Panc1 (cell line): ENCODE measurements at regions of chr6 and their contacts with region 1.

Region 1: GRCh38 chr6:116969211-116969863 is 92.3 kb downstream of the RFX6 start:
- DNase-seq: peak; percentile 45
- ATAC-seq: peak; percentile 91
- H3K4me3 ChIP-seq: no peak overlapping the region
- H3K27ac ChIP-seq: no peak overlapping the region
- H3K4me1 ChIP-seq: no peaks in the 10 kb centered on the region
- H3K27me3 ChIP-seq: peaks cover 8% of the 10 kb centered on the region
- CTCF ChIP-seq: peak; percentile 84; the same call in 1 of the 2 replicates

Region 2: GRCh38 chr6:116779573-116780164 is 189.7 kb before region 1 on chr6:
- CTCF ChIA-PET with region 1: interaction called, 6 read pairs
- POLR2A ChIA-PET with region 1: no interaction called
- in situ Hi-C with region 1: no loop called
- intact Hi-C with region 1: loop called (anchors 5 kb)
- DNase-seq: peak; percentile 10
- ATAC-seq: peak; percentile 84
- H3K4me3 ChIP-seq: no peak overlapping the region
- H3K27ac ChIP-seq: no peak overlapping the region
- H3K4me1 ChIP-seq: no peaks in the 10 kb centered on the region
- H3K27me3 ChIP-seq: peaks cover 10% of the 10 kb centered on the region; the same call in 1 of the 2 replicates
- CTCF ChIP-seq: peak; percentile 77

Region 3: GRCh38 chr6:116876635-116877611 is 92.4 kb before region 1 on chr6 and contains the start of gene RFX6:
- CTCF ChIA-PET with region 1: interaction called, 8 read pairs
- POLR2A ChIA-PET with region 1: no interaction called
- in situ Hi-C with region 1: no loop called
- intact Hi-C with region 1: loop called (anchors 1 kb)
- DNase-seq: no peak
- ATAC-seq: peak; percentile 76
- H3K4me3 ChIP-seq: peak within 1 kb of the TSS; percentile 22 to 49
- H3K27ac ChIP-seq: no peak within 1 kb of the TSS
- H3K4me1 ChIP-seq: peaks cover 13% of the 10 kb centered on the region
- H3K27me3 ChIP-seq: peaks cover 60% of the 10 kb centered on the region
- CTCF ChIP-seq: no peak
- total RNA-seq, gene RFX6: not detected

Region 4: DNA sequence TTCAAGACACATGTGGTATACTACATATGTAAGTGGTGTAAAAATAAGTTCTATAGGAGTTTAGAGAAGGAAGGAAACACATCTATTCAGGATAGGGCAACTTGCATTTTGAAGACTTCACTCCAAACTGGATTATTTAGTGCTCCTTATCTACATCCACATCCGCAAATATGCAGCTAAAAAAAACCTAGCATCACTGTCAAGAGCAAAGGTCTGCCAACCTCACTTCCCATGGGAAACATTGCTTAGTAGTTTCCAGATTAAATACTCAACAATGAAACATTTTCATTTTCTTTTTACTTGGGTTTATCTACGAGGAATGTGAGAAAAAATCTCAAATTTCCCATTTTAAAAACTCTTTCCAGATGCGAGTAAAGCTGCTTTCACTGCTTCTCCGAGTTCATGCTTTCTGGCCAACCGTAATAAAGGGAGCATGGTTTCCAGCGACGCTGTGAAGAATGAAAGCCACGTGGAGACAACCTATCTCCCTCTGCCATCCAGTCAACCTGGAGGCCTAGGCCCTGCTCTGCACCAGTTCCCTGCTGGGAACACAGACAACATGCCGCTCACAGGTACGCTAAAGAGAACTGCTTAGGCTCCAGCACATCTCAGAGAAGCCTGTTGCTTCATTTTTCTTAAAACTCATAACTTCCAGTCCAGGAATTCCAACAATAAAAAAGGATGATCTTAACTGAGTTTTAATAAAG is 44.1 kb before region 1 on chr6:
- CTCF ChIA-PET with region 1: no interaction called
- POLR2A ChIA-PET with region 1: no interaction called
- in situ Hi-C with region 1: no loop called
- intact Hi-C with region 1: no loop called
- DNase-seq: no peak
- ATAC-seq: no peak
- H3K4me3 ChIP-seq: no peak overlapping the region
- H3K27ac ChIP-seq: no peak overlapping the region
- H3K4me1 ChIP-seq: peaks cover 9% of the 10 kb centered on the region; the same call in 1 of the 2 replicates
- H3K27me3 ChIP-seq: peaks cover under 1% of the 10 kb centered on the region
- CTCF ChIP-seq: no peak

Region 5: DNA sequence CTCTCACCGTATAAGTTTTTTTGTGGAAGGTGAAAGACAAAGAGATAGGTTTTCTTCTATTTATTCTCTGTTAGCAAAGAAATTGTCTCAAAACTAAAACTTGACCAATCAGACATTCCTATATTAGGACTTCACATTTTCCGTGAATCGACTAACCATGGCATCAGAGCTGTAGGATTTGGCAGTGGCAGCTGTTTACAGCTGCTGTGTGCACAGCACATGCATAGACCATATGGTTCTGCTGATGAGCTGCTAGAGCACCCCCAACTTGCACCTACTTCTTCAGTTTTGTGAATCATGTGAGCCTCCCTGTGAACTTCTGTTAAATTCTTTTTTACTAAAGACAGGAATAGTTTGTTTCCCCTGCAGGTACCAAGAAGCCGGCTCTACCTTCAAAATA is 65.6 kb after region 1 on chr6:
- CTCF ChIA-PET with region 1: no interaction called
- POLR2A ChIA-PET with region 1: no interaction called
- in situ Hi-C with region 1: no loop called
- intact Hi-C with region 1: no loop called
- DNase-seq: no peak
- ATAC-seq: no peak
- H3K4me3 ChIP-seq: no peak overlapping the region
- H3K27ac ChIP-seq: no peak overlapping the region
- H3K4me1 ChIP-seq: no peaks in the 10 kb centered on the region
- H3K27me3 ChIP-seq: no peaks in the 10 kb centered on the region
- CTCF ChIP-seq: no peak

Region 6: DNA sequence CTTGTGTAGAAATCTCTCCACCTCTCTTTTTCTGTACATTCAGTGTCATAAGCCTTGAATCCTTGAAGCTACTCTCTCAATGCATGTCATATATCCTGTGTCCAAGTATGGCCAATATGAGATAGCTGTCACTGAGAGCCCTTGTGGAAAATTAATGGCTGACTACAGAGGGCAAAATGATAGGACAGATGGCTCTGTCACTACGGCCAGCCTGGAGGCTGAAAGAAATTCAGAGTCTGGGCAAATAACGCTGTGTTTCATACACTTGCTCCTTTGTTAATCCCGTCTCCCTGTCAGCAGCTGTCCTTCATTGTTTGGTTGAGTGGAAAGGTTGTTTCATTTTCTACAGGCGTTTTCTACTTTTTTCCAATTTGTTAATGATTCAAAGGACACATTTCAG is 225.6 kb after region 1 on chr6:
- CTCF ChIA-PET with region 1: no interaction called
- POLR2A ChIA-PET with region 1: no interaction called
- in situ Hi-C with region 1: no loop called
- intact Hi-C with region 1: loop called (anchors 5 kb)
- DNase-seq: no peak
- ATAC-seq: no peak
- H3K4me3 ChIP-seq: no peak overlapping the region
- H3K27ac ChIP-seq: no peak overlapping the region
- H3K4me1 ChIP-seq: no peaks in the 10 kb centered on the region
- H3K27me3 ChIP-seq: no peaks in the 10 kb centered on the region
- CTCF ChIP-seq: no peak

Region 7: GRCh38 chr6:117317261-117317660 is 347.9 kb after region 1 on chr6:
- CTCF ChIA-PET with region 1: no interaction called
- POLR2A ChIA-PET with region 1: no interaction called
- in situ Hi-C with region 1: no loop called
- intact Hi-C with region 1: loop called (anchors 2 kb)
- DNase-seq: peak; percentile 20
- ATAC-seq: peak; percentile 72; the same call in 1 of the 2 replicates
- H3K4me3 ChIP-seq: no peak overlapping the region
- H3K27ac ChIP-seq: no peak overlapping the region
- H3K4me1 ChIP-seq: no peaks in the 10 kb centered on the region
- H3K27me3 ChIP-seq: peaks cover 2% of the 10 kb centered on the region; the same call in 1 of the 2 replicates
- CTCF ChIP-seq: peak; percentile 68